ENCODE measurements at regions of chr2 and their contacts with region 1.

Region 1: DNA sequence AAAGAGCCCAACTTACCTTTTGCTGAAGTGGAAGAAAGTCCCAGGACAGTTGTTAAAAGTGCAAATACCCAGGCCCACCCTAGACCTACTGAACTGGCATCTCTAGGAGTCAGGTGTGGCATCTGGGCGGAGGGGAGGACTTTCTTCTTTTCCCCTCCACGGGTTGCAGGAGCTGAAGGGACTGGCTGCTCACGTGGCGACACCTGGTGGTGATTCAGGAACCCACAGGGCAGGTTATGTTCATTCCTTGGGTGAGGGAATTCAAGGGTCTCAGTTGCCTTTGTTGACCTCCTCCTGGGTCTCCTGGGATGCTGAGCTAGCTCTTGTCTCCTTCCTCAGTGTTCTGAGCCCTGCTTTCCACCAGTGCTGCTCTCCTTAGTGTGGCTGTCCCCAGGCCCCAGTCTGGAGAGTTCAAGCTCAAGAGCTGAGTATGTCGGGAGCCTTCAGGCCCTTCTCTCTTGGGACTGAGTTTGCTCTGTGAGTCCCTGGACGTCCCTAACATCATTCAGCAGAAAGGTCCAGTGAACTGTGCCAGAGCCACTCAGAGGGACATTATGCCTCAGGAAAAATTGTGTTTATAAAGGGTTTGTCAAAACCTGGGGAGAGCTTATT is 56.9 kb downstream of the DYSF start:
- DNase-seq: peak; percentile 76
- ATAC-seq: peak; percentile 63
- H3K4me3 Mint-ChIP-seq: no peak overlapping the region
- H3K27ac Mint-ChIP-seq: no peak overlapping the region
- H3K4me1 Mint-ChIP-seq: peaks cover 2% of the 10 kb centered on the region
- H3K27me3 Mint-ChIP-seq: peaks cover 2% of the 10 kb centered on the region

Region 2: DNA sequence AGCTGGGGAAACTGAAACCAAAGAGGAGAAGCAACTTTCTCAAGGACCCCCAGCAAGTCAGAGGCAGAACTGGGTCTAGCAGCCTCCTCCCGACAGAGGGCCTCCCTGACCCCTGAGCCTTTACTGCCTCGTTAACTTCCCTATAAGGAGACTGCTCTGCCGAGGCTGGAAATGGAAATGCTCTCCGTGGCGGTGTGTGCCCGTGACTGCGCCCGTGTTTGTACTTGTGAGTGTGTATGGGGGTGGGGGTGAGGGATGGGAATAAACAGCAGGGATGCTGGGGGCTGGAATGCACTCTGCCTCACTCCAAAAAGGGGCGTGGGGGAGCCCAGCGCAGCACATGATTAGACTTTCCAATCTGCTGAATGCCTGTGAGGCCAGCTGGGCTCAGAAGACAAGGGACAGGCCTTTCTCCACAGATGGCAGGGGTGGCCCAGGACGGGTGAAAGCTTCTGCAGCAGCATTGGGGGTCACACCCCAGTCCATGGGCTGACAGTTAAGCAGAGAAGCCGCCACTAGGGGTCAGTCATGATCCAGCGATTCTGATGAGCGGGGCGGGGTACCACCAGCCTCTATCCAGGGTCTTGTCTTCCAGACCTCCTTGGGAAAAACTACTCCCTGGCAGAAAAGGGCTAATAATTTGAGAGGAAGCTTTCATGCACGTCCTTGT is 353.0 kb before region 1 on chr2:
- CTCF ChIA-PET with region 1: interaction called, 12 read pairs
- DNase-seq: peak; percentile 65
- ATAC-seq: peak; percentile 75
- H3K4me3 Mint-ChIP-seq: peak overlapping the region; percentile 27
- H3K27ac Mint-ChIP-seq: no peak overlapping the region
- H3K4me1 Mint-ChIP-seq: peaks cover 4% of the 10 kb centered on the region
- H3K27me3 Mint-ChIP-seq: peaks cover 2% of the 10 kb centered on the region

Region 3: DNA sequence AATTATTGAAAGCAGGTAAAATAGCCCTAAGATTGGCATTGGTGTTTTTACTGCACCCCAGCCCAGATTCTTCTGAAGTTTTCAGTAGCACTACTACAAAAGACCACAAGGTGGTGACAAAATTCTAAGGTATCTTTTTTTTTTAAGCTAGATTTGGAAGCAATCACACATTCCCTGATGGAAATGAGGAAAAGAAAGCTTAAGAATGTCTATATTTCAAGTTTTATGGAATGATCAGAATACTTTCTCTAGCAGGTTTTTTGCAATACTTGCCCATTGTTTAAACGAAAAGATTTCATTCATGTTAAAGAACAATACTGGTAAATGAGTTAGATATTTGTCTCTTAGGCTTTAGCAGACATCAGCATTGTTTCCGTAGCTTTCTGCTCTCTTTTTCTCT is 210.8 kb before region 1 on chr2:
- CTCF ChIA-PET with region 1: interaction called, 154 read pairs
- DNase-seq: no peak
- ATAC-seq: no peak
- H3K4me3 Mint-ChIP-seq: no peak overlapping the region
- H3K27ac Mint-ChIP-seq: no peak overlapping the region
- H3K4me1 Mint-ChIP-seq: no peaks in the 10 kb centered on the region
- H3K27me3 Mint-ChIP-seq: peaks cover 6% of the 10 kb centered on the region

Region 4: GRCh38 chr2:71380665-71381064 is 129.6 kb before region 1 on chr2:
- CTCF ChIA-PET with region 1: no interaction called
- DNase-seq: no peak
- ATAC-seq: no peak
- H3K4me3 Mint-ChIP-seq: no peak overlapping the region
- H3K27ac Mint-ChIP-seq: no peak overlapping the region
- H3K4me1 Mint-ChIP-seq: peaks cover 17% of the 10 kb centered on the region
- H3K27me3 Mint-ChIP-seq: no peaks in the 10 kb centered on the region

Region 5: GRCh38 chr2:71482055-71482454 is 28.2 kb before region 1 on chr2:
- CTCF ChIA-PET with region 1: no interaction called
- DNase-seq: no peak
- ATAC-seq: no peak
- H3K4me3 Mint-ChIP-seq: no peak overlapping the region
- H3K27ac Mint-ChIP-seq: no peak overlapping the region
- H3K4me1 Mint-ChIP-seq: no peaks in the 10 kb centered on the region
- H3K27me3 Mint-ChIP-seq: peaks cover 7% of the 10 kb centered on the region

Region 6: GRCh38 chr2:71662611-71663394 is 152.5 kb after region 1 on chr2:
- CTCF ChIA-PET with region 1: no interaction called
- DNase-seq: no peak
- ATAC-seq: no peak
- H3K4me3 Mint-ChIP-seq: no peak overlapping the region
- H3K27ac Mint-ChIP-seq: no peak overlapping the region
- H3K4me1 Mint-ChIP-seq: no peaks in the 10 kb centered on the region
- H3K27me3 Mint-ChIP-seq: no peaks in the 10 kb centered on the region

Measured in activated CD8-positive, alpha-beta memory T cell treated with anti-CD3 and anti-CD28 coated beads, Interleukin-2, amount 10 ng/mL, durations not matched to agents 7 days and 5 days (primary cell).